A673 (cell line): ENCODE measurements at regions of chr12 and their contacts with region 1.

Region 1: GRCh38 chr12:50542448-50542847 is 37.7 kb downstream of the DIP2B start:
- DNase-seq: no peak
- H3K4me3 ChIP-seq: no peak overlapping the region
- H3K27ac ChIP-seq: peak overlapping the region; percentile 41
- H3K4me1 ChIP-seq: peaks cover 52% of the 10 kb centered on the region
- H3K27me3 ChIP-seq: no peaks in the 10 kb centered on the region
- CTCF ChIP-seq: no peak

Region 2: DNA sequence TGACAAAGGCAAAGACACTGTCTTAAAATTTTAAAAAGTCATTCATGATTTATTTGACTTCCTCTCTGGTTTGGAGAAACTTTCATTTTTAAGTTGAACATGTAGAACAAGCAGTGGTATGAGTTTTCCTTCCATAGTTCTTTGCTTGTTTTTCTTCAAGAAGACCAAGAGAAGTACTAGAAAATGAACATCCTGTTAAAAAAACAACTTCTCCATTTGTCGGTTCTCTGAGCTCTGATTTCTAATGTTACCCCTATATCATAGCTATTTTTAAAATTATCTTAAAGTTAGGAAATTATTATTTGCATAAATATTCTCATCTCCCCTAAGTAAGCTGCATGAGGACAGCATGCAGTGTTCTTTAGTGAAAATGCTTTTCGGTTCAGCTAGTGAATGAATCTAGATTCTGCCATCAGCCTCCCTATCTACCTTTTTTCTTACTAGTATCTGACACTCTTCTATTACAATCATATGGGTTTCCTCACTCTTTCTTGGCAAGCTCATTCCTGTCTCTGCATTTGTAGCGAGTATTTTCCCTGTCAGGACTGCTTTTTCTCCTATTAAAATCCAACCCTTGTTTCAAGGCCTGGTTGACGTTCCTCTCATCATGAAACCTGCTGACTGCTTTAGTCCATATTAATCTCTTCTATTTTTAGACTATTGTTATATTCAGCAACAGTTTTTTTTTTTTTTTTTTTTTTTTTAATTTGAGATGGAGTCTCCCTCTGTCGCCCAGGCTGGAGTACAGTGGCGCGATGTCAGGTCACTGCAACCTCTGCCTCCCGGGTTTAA is 21.8 kb before region 1 on chr12:
- CTCF ChIA-PET with region 1: no interaction called
- POLR2A ChIA-PET with region 1: interaction called, 16 read pairs
- intact Hi-C with region 1: no loop called
- DNase-seq: peak; percentile 31
- H3K4me3 ChIP-seq: no peak overlapping the region
- H3K27ac ChIP-seq: peak overlapping the region; percentile 51
- H3K4me1 ChIP-seq: peaks cover 28% of the 10 kb centered on the region
- H3K27me3 ChIP-seq: no peaks in the 10 kb centered on the region
- CTCF ChIP-seq: no peak

Region 3: GRCh38 chr12:50589650-50590435 is 47.4 kb after region 1 on chr12:
- CTCF ChIA-PET with region 1: no interaction called
- POLR2A ChIA-PET with region 1: interaction called, 3 read pairs
- intact Hi-C with region 1: loop called (anchors 5 kb)
- DNase-seq: peak; percentile 97
- H3K4me3 ChIP-seq: peak overlapping the region; percentile 9
- H3K27ac ChIP-seq: peak overlapping the region; percentile 95
- H3K4me1 ChIP-seq: peaks cover 37% of the 10 kb centered on the region
- H3K27me3 ChIP-seq: no peaks in the 10 kb centered on the region
- CTCF ChIP-seq: no peak

Region 4: DNA sequence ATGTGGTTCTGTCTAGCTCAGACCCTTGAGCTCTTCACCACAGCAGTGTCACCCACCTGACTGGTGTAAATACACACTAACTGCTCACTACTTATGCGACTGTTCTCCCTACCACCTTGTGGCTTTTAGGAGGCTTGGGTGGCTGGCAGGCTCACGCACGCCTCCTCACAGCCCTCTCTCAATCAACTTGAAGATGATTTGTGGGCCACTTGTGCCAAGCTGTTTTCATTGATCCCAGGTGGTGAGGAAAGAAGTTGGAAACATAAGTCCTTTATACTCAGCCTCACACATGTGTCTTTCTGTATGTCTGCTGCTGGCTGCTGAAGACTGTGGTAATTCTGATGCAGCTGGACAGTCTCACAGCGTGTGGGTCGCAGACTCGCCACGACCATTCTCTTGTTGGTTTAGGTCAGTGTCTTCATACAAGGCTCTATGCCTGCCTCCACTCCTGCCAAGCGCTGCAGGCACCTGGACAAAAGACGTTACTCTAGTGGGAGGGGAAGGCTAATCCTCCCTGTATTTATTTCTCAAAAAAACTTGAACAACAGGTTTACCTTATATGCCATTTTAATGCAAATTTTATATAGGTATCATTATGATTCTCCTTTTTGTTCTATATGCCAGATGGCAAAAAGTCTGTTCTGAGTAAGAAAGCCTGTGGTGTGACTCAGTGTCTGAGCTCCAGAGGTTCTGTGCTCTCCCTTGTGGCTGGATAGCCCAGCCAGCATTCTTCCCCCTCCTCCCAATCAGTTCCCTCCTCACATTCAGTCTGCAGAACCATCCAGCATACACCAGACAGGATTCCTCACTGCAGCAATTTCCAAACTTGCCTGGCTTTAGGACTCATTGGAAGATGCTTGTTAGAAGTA is 77.9 kb after region 1 on chr12:
- CTCF ChIA-PET with region 1: no interaction called
- POLR2A ChIA-PET with region 1: interaction called, 12 read pairs
- intact Hi-C with region 1: no loop called
- DNase-seq: peak; percentile 61
- H3K4me3 ChIP-seq: no peak overlapping the region
- H3K27ac ChIP-seq: peak overlapping the region; percentile 76
- H3K4me1 ChIP-seq: peaks cover 72% of the 10 kb centered on the region
- H3K27me3 ChIP-seq: no peaks in the 10 kb centered on the region
- CTCF ChIP-seq: no peak

Region 5: DNA sequence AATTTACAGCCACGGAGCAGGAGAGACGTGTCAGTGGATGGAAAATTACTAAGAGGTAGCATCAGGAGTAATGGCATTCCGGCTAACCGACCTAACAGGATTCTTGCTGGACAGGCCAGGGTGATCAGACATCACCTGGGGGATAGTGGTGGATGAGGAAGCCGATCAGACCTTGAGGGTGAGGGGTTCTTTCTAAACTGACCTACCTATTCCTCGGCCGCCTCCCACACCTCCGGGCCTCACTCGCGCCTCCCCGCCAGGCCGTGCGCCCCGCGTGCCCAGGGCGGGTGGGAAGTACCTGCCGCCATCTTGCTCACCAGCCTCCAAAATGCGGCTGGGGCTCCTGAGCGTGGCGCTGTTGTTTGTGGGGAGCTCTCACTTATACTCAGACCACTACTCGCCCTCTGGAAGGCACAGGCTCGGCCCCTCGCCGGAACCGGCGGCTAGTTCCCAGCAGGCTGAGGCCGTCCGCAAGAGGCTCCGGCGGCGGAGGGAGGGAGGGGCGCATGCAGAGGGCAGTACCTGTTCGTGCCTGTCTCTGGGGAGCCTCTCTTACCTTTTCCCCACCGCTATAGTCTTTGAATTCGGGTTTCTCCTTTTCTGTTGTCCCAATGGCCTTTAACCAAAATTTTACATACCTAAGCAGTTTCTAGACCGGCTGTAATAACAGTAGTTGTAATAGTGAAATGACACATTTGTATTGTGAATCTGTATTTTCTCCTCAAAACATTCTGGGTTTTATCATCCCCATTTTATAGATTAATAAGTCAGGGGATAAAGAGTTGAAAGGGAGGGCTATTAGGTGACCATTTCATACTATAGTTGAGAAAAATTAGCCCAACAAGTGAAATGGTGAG is 300.4 kb after region 1 on chr12 and contains the start of gene TMPRSS12:
- CTCF ChIA-PET with region 1: no interaction called
- POLR2A ChIA-PET with region 1: no interaction called
- intact Hi-C with region 1: no loop called
- DNase-seq: no peak
- H3K4me3 ChIP-seq: no peak within 1 kb of the TSS
- H3K27ac ChIP-seq: no peak within 1 kb of the TSS
- H3K4me1 ChIP-seq: no peaks in the 10 kb centered on the region
- H3K27me3 ChIP-seq: no peaks in the 10 kb centered on the region
- CTCF ChIP-seq: no peak
- total RNA-seq, gene TMPRSS12: not detected in 2 replicates